HepG2 (cell line): ENCODE measurements at regions of chr7 and their contacts with region 1.

Region 1: GRCh38 chr7:99693427-99694200 is 13.8 kb upstream of the CYP3A5 start:
- DNase-seq: peak; percentile 97
- ATAC-seq: peak; percentile 92
- H3K4me3 ChIP-seq: peak overlapping the region; percentile 38 to 65 (median 38)
- H3K27ac ChIP-seq: peak overlapping the region; percentile 97
- H3K4me1 ChIP-seq: peaks cover 72% of the 10 kb centered on the region
- H3K27me3 ChIP-seq: no peaks in the 10 kb centered on the region
- CTCF ChIP-seq: no peak; the same call in 1 of the 2 replicates
- EP300 ChIP-seq: peak in 1 of 2 experiments; percentile 57; a peak in 1 of 4 replicates
- POLR2A ChIP-seq: peak; percentile 72 to 84
- RAD21 ChIP-seq: peak; percentile 50; the same call in 1 of the 2 replicates

Region 2: GRCh38 chr7:99558306-99559174 is 135.1 kb before region 1 on chr7 and contains the start of gene ZNF655:
- CTCF ChIA-PET with region 1: no interaction called
- POLR2A ChIA-PET with region 1: interaction called, 13 read pairs
- in situ Hi-C with region 1: no loop called
- intact Hi-C with region 1: no loop called
- DNase-seq: peak; percentile 90
- ATAC-seq: peak; percentile 96
- H3K4me3 ChIP-seq: peak within 1 kb of the TSS; percentile 87 to 99 (median 98)
- H3K27ac ChIP-seq: peak within 1 kb of the TSS; percentile 95
- H3K4me1 ChIP-seq: peaks cover 43% of the 10 kb centered on the region
- H3K27me3 ChIP-seq: no peaks in the 10 kb centered on the region; a peak in 1 of 5 replicates
- CTCF ChIP-seq: no peak
- EP300 ChIP-seq: no peak
- POLR2A ChIP-seq: peak; percentile 67 to 94
- RAD21 ChIP-seq: peak; percentile 28; the same call in 1 of the 2 replicates
- total RNA-seq, gene ZNF655: 53.4 and 54.8 TPM in 2 replicates

Region 3: GRCh38 chr7:99631295-99632109 is 62.1 kb before region 1 on chr7:
- CTCF ChIA-PET with region 1: no interaction called
- POLR2A ChIA-PET with region 1: interaction called, 35 read pairs
- in situ Hi-C with region 1: no loop called
- intact Hi-C with region 1: loop called (anchors 5 kb)
- DNase-seq: peak; percentile 64
- ATAC-seq: peak; percentile 89
- H3K4me3 ChIP-seq: no peak overlapping the region
- H3K27ac ChIP-seq: peak overlapping the region; percentile 10
- H3K4me1 ChIP-seq: peaks cover 24% of the 10 kb centered on the region
- H3K27me3 ChIP-seq: no peaks in the 10 kb centered on the region
- CTCF ChIP-seq: peak; percentile 86
- EP300 ChIP-seq: 0 out of 4 replicates have a peak, but pooled peaks of 1 of the 2 experiments have one; percentile 17
- POLR2A ChIP-seq: no peak
- RAD21 ChIP-seq: peak; percentile 90

Region 4: GRCh38 chr7:99719996-99720769 is 26.6 kb after region 1 on chr7:
- CTCF ChIA-PET with region 1: no interaction called
- POLR2A ChIA-PET with region 1: interaction called, 25 read pairs
- in situ Hi-C with region 1: no loop called
- intact Hi-C with region 1: no loop called
- DNase-seq: peak; percentile 70
- ATAC-seq: peak; percentile 86
- H3K4me3 ChIP-seq: no peak overlapping the region; a peak in 1 of 6 replicates
- H3K27ac ChIP-seq: peak overlapping the region; percentile 48
- H3K4me1 ChIP-seq: peaks cover 24% of the 10 kb centered on the region
- H3K27me3 ChIP-seq: no peaks in the 10 kb centered on the region
- CTCF ChIP-seq: no peak
- EP300 ChIP-seq: peak in 1 of 2 experiments; percentile 73; a peak in 2 of 4 replicates
- POLR2A ChIP-seq: no peak
- RAD21 ChIP-seq: no peak

Region 5: GRCh38 chr7:99740573-99741440 is 47.2 kb after region 1 on chr7:
- CTCF ChIA-PET with region 1: no interaction called
- POLR2A ChIA-PET with region 1: interaction called, 12 read pairs
- in situ Hi-C with region 1: no loop called
- intact Hi-C with region 1: no loop called
- DNase-seq: peak; percentile 8
- ATAC-seq: no peak
- H3K4me3 ChIP-seq: no peak overlapping the region
- H3K27ac ChIP-seq: no peak overlapping the region
- H3K4me1 ChIP-seq: peaks cover 66% of the 10 kb centered on the region
- H3K27me3 ChIP-seq: no peaks in the 10 kb centered on the region
- CTCF ChIP-seq: no peak
- EP300 ChIP-seq: no peak
- POLR2A ChIP-seq: no peak
- RAD21 ChIP-seq: no peak

Region 6: GRCh38 chr7:99860281-99861127 is 166.9 kb after region 1 on chr7:
- CTCF ChIA-PET with region 1: no interaction called
- POLR2A ChIA-PET with region 1: interaction called, 23 read pairs
- in situ Hi-C with region 1: no loop called
- intact Hi-C with region 1: no loop called
- DNase-seq: peak; percentile 97
- ATAC-seq: peak; percentile 98
- H3K4me3 ChIP-seq: peak overlapping the region in 2 of 3 experiments; percentile 1 to 46; a peak in 4 of 6 replicates
- H3K27ac ChIP-seq: peak overlapping the region; percentile 92
- H3K4me1 ChIP-seq: peaks cover 73% of the 10 kb centered on the region
- H3K27me3 ChIP-seq: no peaks in the 10 kb centered on the region
- CTCF ChIP-seq: no peak
- EP300 ChIP-seq: peak in 1 of 2 experiments; percentile 86; a peak in 2 of 4 replicates
- POLR2A ChIP-seq: peak in 1 of 2 experiments; percentile 60; a peak in 2 of 4 replicates
- RAD21 ChIP-seq: no peak